MCF 10A (cell line): ENCODE measurements at regions of chr11 and their contacts with region 1.

Region 1: DNA sequence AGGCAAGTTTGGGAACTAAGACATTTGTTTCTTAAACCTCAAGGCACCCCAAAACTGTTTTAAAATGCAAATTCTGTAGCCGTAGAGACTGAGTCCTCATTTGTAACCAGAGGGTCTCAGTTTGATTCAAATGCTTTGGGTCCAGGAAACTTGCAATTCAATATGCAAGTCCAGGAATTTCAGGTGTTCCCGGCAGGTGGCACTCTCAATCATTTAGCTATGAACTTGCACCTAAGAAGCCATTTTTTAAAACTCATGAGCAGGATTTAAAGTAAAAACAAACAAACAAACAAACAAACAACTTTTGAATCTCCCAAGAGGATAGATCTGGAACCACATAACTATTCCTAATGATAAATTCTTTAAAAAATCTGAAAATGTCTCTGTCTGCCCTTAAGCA is 8.7 kb upstream of the ABTB2 start:
- DNase-seq: peak; percentile 62
- H3K4me3 Mint-ChIP-seq: no peak overlapping the region
- H3K27ac Mint-ChIP-seq: no peak overlapping the region
- H3K4me1 Mint-ChIP-seq: peaks cover 7% of the 10 kb centered on the region
- H3K27me3 Mint-ChIP-seq: no peaks in the 10 kb centered on the region
- CTCF ChIP-seq: peak; percentile 56

Region 2: DNA sequence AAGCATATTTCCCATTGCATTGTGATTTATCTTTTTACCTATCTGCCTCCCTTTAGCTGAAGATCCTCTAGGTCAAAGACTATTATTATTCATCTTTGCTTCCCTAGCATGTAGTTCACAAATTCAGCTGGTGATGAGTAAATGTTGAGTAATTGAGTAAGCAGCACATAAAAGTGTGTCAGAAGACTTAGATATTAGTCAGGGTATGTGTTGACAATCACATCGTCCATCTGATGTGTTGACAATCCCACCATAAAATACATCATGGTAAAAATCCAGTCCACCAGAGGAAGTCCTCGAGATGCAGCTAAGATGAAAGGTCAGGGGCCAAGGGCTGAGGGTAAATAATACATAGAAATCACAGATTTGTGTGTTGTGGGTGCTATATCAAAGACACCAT is 14.2 kb after region 1 on chr11:
- CTCF ChIA-PET with region 1: interaction called, 3 read pairs
- POLR2A ChIA-PET with region 1: interaction called, 11 read pairs
- intact Hi-C with region 1: no loop called
- DNase-seq: peak; percentile 59
- H3K4me3 Mint-ChIP-seq: no peak overlapping the region
- H3K27ac Mint-ChIP-seq: no peak overlapping the region
- H3K4me1 Mint-ChIP-seq: peaks cover 8% of the 10 kb centered on the region
- H3K27me3 Mint-ChIP-seq: no peaks in the 10 kb centered on the region
- CTCF ChIP-seq: no peak

Region 3: DNA sequence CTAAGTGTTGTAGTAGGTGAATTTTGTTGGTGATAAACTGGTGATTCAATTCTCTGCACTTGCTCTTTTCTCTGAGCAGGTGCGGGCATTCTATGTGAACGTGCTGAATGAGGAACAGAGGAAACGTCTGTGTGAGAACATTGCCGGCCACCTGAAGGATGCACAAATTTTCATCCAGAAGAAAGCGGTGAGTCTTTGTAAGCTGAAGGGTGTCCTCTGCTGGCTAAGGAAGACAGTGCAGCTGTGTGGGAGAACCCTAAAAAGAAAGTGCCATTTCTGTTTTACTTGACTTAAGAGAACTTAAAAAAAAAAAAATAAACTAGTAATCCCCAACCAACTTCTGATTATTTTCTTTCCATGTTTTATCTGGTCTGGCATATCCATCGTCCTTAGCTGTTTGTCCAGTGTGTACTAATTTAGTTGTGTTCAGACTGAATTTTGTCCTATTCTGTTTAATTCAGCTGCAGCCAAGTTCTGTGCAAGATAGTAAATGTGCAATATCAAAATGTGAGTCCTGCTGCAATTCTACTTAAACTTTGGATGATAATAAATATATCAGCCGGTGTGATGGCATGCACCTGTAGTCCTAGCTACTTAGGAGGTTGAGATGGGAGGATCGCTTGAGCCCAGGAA is 101.8 kb after region 1 on chr11:
- CTCF ChIA-PET with region 1: interaction called, 120 read pairs
- POLR2A ChIA-PET with region 1: interaction called, 11 read pairs
- intact Hi-C with region 1: loop called (anchors 1 kb)
- DNase-seq: peak; percentile 57
- H3K4me3 Mint-ChIP-seq: no peak overlapping the region
- H3K27ac Mint-ChIP-seq: no peak overlapping the region
- H3K4me1 Mint-ChIP-seq: no peaks in the 10 kb centered on the region
- H3K27me3 Mint-ChIP-seq: no peaks in the 10 kb centered on the region
- CTCF ChIP-seq: peak; percentile 83

Region 4: GRCh38 chr11:34492806-34493414 is 126.4 kb after region 1 on chr11:
- CTCF ChIA-PET with region 1: interaction called, 158 read pairs
- POLR2A ChIA-PET with region 1: interaction called, 4 read pairs
- intact Hi-C with region 1: loop called (anchors 1 kb)
- DNase-seq: peak; percentile 76
- H3K4me3 Mint-ChIP-seq: no peak overlapping the region
- H3K27ac Mint-ChIP-seq: no peak overlapping the region
- H3K4me1 Mint-ChIP-seq: no peaks in the 10 kb centered on the region
- H3K27me3 Mint-ChIP-seq: no peaks in the 10 kb centered on the region
- CTCF ChIP-seq: peak; percentile 56

Region 5: DNA sequence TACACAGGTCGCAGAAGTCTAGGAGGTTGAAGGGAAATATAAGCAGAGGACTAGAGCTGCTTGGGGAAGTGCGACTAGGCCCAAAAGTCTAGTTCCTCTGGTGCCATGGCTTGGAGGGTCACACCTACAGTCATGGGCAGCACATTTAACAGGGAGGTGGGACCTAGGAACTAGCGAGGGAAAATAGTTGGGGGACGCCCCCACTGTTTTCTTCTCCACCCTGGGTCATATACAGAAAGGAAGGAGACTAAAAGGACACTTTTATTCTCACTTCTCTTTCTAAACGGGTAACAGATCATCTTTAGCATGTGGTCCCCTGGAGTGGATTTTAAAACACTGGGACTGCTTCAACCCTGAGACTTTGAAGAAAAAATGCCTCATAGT is 533.1 kb after region 1 on chr11:
- CTCF ChIA-PET with region 1: interaction called, 16 read pairs
- POLR2A ChIA-PET with region 1: no interaction called
- intact Hi-C with region 1: no loop called
- DNase-seq: peak; percentile 14
- H3K4me3 Mint-ChIP-seq: no peak overlapping the region
- H3K27ac Mint-ChIP-seq: no peak overlapping the region
- H3K4me1 Mint-ChIP-seq: peaks cover 4% of the 10 kb centered on the region
- H3K27me3 Mint-ChIP-seq: no peaks in the 10 kb centered on the region
- CTCF ChIP-seq: no peak